ENCODE measurements at regions of chr12 and their contacts with region 1.

Region 1: DNA sequence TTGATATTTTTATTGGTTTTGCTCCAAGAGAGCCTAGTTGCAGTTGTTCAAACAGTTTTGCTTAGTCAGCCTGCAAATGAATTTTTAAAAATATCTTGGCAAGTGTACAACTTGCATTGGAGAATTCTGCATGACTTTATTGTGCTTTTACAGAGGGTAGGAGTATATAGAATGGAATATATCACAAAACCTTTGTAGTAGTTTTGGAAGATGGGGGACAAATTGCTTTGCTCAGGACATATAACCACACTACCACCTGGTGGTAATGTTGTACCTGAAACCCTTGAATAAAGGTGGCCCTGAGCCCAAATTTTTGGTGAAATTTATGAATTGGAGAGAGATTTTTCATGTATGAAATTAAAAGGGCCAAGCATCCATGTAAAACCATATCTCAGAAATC is 645.2 kb downstream of the MED13L start:
- DNase-seq: no peak
- ATAC-seq: no peak
- H3K4me3 ChIP-seq: no peak overlapping the region
- H3K27ac ChIP-seq: no peak overlapping the region
- H3K4me1 ChIP-seq: no peaks in the 10 kb centered on the region
- H3K27me3 ChIP-seq: peaks cover 0 to under 1% (median 0%) of the 10 kb centered on the region in 3 donors
- CTCF ChIP-seq: peak in 4 of 5 experiments; percentile 11 to 42 (median 20)
- POLR2A ChIP-seq: no peak

Region 2: DNA sequence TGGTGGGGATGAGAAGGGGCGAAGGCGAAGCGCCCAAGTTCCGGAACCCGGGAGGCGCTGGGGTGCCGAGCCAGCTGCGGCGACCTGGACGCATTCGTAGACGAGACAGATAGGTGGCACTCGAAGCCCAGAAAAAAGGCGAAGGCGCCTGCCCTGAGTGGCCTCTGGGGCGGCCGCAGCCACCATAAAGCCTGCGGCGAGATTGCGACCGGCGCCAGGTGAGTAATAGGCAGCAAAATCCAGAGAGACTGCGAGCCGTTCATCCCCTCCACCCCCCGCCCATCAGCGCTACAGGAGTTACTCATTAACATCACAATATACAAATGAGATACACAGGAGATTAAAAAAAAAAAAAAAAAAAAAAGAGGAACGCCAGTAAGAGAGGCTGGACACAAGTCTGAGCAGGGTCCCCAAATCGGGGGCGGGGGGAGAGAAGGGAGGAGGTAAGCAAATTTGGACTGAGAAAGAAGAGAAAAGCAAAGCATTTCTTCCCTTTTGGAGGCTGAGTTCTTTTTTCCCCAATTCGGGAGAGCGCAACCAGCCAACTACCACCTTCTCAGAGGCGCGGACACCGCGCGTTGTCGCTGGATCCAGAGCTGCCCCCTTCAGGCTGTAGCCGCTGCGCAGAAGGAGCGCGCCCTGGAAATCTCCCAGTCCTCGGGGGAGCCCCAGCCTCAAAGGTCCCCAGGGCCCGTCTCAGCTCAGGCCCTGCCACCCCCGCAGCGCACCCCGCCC is 964.0 kb before region 1 on chr12:
- in situ Hi-C with region 1: no loop called
- intact Hi-C with region 1: loop called (anchors 2 kb)
- DNase-seq: peak; percentile 63 to 71
- ATAC-seq: peak; percentile 86 to 88
- H3K4me3 ChIP-seq: peak overlapping the region; percentile 52 to 73 (median 60)
- H3K27ac ChIP-seq: peak overlapping the region; percentile 42 to 80 (median 70)
- H3K4me1 ChIP-seq: peaks cover 2 to 4% of the 10 kb centered on the region in 2 donors
- H3K27me3 ChIP-seq: peaks cover 14 to 41% (median 40%) of the 10 kb centered on the region in 3 donors
- CTCF ChIP-seq: peak; percentile 40 to 73 (median 71)
- POLR2A ChIP-seq: no peak

Region 3: GRCh38 chr12:115672506-115673080 is 40.3 kb after region 1 on chr12:
- in situ Hi-C with region 1: no loop called
- intact Hi-C with region 1: loop called (anchors 1 kb)
- DNase-seq: no peak
- ATAC-seq: no peak
- H3K4me3 ChIP-seq: no peak overlapping the region
- H3K27ac ChIP-seq: no peak overlapping the region
- H3K4me1 ChIP-seq: no peaks in the 10 kb centered on the region
- H3K27me3 ChIP-seq: peaks cover 0 to 3% (median 0%) of the 10 kb centered on the region in 3 donors
- CTCF ChIP-seq: no peak
- POLR2A ChIP-seq: no peak